ENCODE measurements at regions of chr1 and their contacts with region 1.

Region 1: GRCh38 chr1:243546457-243546856 is 290.6 kb downstream of the SDCCAG8 start:
- DNase-seq: no peak
- ATAC-seq: no peak
- H3K4me3 ChIP-seq: no peak overlapping the region
- H3K4me3 Mint-ChIP-seq: no peak overlapping the region
- H3K27ac ChIP-seq: no peak overlapping the region
- H3K27ac Mint-ChIP-seq: no peak overlapping the region
- H3K4me1 ChIP-seq: no peaks in the 10 kb centered on the region
- H3K4me1 Mint-ChIP-seq: peaks cover 0 to 8% (median 2%) of the 10 kb centered on the region in 3 donors
- H3K27me3 ChIP-seq: no peaks in the 10 kb centered on the region
- H3K27me3 Mint-ChIP-seq: no peaks in the 10 kb centered on the region

Region 2: DNA sequence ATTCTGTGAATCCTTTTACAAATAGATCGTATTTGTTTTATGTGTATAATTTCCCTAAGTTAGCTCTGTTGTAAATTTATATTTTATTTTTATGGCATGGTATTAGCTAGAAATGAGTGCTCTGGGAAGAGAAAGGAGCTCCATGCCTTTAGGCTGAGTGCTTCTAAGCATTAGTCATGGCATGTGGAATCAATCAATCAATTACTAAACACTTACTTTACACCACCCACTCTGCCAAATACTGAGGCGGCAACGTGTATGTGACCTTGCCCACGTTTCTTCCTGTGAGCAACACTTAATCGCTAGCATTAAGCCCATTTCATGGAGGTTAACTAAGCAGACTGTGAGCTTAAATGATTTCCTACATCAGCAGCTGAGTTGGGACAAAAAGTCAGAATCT is 1596.1 kb before region 1 on chr1:
- CTCF ChIA-PET with region 1: no interaction called
- POLR2A ChIA-PET with region 1: interaction called in 1 of 2 experiments, 10 read pairs
- DNase-seq: no peak
- ATAC-seq: no peak
- H3K4me3 ChIP-seq: no peak overlapping the region
- H3K4me3 Mint-ChIP-seq: no peak overlapping the region
- H3K27ac ChIP-seq: no peak overlapping the region
- H3K27ac Mint-ChIP-seq: no peak overlapping the region
- H3K4me1 ChIP-seq: no peaks in the 10 kb centered on the region
- H3K4me1 Mint-ChIP-seq: no peaks in the 10 kb centered on the region
- H3K27me3 ChIP-seq: peaks cover 0 to 2% of the 10 kb centered on the region in 2 experiments
- H3K27me3 Mint-ChIP-seq: peaks cover 3 to 5% of the 10 kb centered on the region in 2 donors

Region 3: GRCh38 chr1:243609698-243610097 is 63.2 kb after region 1 on chr1:
- CTCF ChIA-PET with region 1: no interaction called
- POLR2A ChIA-PET with region 1: no interaction called
- DNase-seq: no peak
- ATAC-seq: no peak
- H3K4me3 ChIP-seq: no peak overlapping the region
- H3K4me3 Mint-ChIP-seq: no peak overlapping the region
- H3K27ac ChIP-seq: no peak overlapping the region
- H3K27ac Mint-ChIP-seq: no peak overlapping the region
- H3K4me1 ChIP-seq: no peaks in the 10 kb centered on the region
- H3K4me1 Mint-ChIP-seq: no peaks in the 10 kb centered on the region
- H3K27me3 ChIP-seq: no peaks in the 10 kb centered on the region
- H3K27me3 Mint-ChIP-seq: no peaks in the 10 kb centered on the region